ENCODE measurements at regions of chr12 and their contacts with region 1.

Region 1: DNA sequence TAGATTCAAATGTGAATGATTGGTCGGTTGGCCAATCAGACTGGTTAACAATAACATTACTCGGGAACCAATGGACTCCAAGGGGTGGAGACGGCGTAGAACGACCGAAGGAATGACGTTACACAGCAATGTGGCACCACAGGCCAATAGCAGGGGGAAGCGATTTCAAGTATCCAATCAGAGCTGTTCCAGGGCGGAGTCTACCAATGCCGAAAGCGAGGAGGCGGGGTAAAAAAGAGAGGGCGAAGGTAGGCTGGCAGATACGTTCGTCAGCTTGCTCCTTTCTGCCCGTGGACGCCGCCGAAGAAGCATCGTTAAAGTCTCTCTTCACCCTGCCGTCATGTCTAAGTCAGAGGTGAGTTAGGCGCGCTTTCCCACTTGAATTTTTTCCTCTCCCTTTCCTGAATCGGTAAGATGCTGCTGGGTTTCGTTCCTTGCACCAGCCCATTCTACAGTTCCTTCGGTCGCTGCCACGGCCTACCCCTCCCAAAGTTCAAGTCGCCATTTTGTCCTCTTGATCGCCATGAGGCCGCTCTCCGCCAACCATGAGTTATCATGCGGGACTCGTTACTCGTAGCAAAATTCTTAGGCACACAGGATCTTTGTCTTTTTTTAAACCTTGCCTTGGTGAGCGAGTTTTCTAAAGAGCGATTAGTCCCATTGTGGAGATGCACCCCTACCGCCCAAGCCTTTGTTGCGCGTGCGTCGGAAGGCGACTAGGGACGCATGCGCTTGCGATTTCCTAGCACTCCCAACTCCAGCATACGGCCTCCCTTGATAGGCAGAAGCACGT is at the start of gene HNRNPA1:
- H3K4me3 ChIP-seq: peak within 1 kb of the TSS; percentile 99
- H3K27ac ChIP-seq: peak within 1 kb of the TSS; percentile 94
- H3K4me1 ChIP-seq: peaks cover 5% of the 10 kb centered on the region
- CTCF ChIP-seq: no peak; the same call in 1 of the 2 replicates

Region 2: DNA sequence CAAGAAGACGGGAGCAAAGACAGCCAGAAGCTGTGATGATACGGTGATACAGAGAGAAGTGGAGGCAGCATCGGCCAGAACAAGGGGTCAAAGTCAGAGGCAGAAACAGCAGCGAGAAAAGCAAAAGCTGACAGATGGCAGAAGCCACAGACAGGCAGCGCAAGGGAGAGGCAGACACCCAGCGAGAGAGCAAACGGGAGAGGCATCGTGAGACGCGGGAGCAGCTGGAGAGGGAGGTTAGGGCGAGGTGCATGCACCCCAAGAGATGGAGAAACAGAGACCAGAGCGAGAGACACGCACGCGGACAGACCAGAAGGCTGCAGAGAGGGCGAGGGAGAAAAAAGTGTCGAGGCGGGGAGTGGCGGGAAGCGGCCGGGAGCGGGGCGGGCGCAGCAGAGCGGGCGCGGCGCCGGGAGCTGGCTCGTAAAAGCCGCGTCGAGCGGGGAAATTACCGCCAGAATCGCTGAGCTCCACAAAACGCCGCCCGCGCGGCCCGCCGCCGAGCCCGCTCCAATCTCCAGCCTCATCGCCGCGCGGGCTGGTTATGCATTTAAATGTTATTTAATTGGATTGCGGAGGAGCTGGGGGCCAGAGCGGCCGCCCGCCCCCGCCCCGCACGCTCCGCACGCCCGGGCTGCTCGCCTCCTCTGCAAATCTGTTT is 107.5 kb before region 1 on chr12:
- CTCF ChIA-PET with region 1: no interaction called
- POLR2A ChIA-PET with region 1: no interaction called
- H3K4me3 ChIP-seq: peak overlapping the region; percentile 23
- H3K27ac ChIP-seq: peak overlapping the region; percentile 40; the same call in 1 of the 2 replicates
- H3K4me1 ChIP-seq: peaks cover 12% of the 10 kb centered on the region; the same call in 1 of the 2 replicates
- CTCF ChIP-seq: no peak

Region 3: DNA sequence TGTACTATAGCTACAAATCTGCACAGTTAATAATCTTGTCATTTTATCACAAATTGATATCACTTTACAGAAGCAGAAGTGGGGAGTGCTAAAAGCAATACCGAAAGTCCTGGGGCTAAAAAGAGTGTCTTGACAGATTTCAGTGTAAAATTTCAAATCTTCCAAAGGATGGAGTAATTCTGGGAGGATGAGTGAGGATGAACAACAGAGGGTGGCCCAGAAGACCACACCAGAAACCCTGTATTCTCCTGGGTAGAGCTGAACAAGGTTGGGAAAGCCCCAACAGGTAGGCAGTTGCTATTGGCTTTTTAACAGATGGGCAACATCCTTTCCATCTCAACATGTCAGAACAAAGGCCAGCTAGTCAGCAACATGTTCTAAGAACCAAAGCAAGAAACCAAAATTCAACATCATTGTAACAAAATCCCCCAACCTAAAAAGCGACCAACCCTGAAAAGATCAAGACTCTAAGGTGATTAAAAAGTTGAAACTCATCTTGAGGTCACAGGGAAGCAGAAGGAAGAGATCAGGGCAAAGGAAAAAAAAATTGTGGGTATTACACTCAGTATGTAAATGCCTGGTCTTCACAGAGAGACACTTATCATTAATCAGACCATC is 39.6 kb before region 1 on chr12:
- CTCF ChIA-PET with region 1: interaction called, 5 read pairs
- POLR2A ChIA-PET with region 1: interaction called, 11 read pairs
- H3K4me3 ChIP-seq: no peak overlapping the region
- H3K27ac ChIP-seq: no peak overlapping the region
- H3K4me1 ChIP-seq: no peaks in the 10 kb centered on the region
- CTCF ChIP-seq: no peak

Region 4: DNA sequence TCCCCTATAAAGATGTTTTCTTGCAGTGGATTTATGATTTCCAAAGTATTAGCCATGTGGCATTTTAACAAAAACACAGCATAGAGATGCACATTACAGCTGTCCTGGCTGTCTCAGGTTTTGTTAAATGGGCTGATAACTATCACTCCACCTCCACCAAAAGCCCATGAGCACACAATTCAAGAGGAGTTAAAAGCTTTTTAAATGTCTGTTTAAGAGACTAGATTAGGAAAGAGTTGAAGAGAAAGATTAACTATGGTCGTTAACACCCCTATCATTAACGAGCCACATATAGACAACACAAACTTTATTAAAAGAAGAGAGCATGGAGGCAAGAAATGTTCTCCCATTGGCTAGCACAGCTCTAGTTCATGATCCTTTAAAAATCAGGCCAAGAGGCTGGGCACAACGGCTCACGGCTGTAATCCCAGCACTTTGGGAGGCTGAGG is 15.3 kb before region 1 on chr12:
- CTCF ChIA-PET with region 1: interaction called, 6 read pairs
- POLR2A ChIA-PET with region 1: interaction called, 113 read pairs
- H3K4me3 ChIP-seq: no peak overlapping the region
- H3K27ac ChIP-seq: no peak overlapping the region
- H3K4me1 ChIP-seq: peaks cover 25% of the 10 kb centered on the region
- CTCF ChIP-seq: no peak

Region 5: DNA sequence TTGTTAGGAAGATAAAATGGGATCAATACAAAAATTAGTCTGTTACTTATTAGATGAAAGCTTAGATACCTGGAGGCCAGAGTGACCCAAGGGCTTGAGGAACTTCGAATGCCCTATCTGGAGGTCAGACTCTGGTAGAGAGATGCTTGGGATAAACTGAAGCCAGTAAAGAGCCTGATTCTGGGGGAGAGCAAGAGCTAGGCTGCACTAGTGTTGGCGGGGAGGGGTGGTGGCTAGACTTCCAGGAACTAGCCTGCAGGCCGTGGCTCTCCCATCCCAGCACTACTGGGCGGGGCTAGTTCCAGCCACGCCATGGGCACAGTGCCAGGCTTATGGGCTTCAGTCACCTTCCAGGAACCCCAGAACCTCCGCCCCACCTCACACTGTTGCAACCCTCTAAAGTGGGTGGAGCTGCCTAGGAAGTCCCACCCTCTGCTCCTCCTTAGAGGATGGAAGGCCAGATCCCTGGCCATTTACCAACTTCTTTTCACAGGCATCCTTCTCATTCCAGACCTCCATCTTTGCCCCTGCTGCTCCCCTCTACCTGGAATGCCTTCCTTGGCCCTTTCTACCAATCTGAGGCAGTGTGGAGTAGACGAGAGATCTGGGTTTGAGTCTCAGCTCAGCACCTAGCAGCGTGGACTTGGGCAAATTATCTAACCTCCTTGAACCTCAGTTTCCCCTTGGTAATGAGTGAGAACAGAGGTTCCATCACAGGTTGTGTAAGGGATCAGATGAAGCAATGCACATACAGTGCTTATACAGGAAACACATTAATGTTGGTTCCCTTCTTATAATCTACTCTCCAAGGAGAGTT is 26.5 kb after region 1 on chr12:
- CTCF ChIA-PET with region 1: no interaction called
- POLR2A ChIA-PET with region 1: interaction called, 25 read pairs
- H3K4me3 ChIP-seq: no peak overlapping the region
- H3K27ac ChIP-seq: no peak overlapping the region
- H3K4me1 ChIP-seq: peaks cover 8% of the 10 kb centered on the region
- CTCF ChIP-seq: no peak

Region 6: GRCh38 chr12:54359033-54359761 is 78.5 kb after region 1 on chr12:
- CTCF ChIA-PET with region 1: interaction called, 20 read pairs
- POLR2A ChIA-PET with region 1: interaction called, 32 read pairs
- H3K4me3 ChIP-seq: peak overlapping the region; percentile 62
- H3K27ac ChIP-seq: peak overlapping the region; percentile 80
- H3K4me1 ChIP-seq: peaks cover 12% of the 10 kb centered on the region
- CTCF ChIP-seq: no peak

Measured in HEK293 (cell line).